Activated T-helper 1 cell treated with anti-CD3 and anti-CD28 coated beads, Interleukin-12 subunit alpha, Interleukin-12 subunit beta, Interleukin-2, Interleukin-4 antibody, amounts not matched to agents 30 ng/mL and 10 ng/mL and 1 ng/mL, durations not matched to agents 14 hours and 24 hours and 36 hours (primary cell): ENCODE measurements at regions of chr17 and their contacts with region 1.

Region 1: GRCh38 chr17:43170766-43171585 is at the start of gene NBR1:
- DNase-seq: peak; percentile 96
- H3K4me3 Mint-ChIP-seq: no peak within 1 kb of the TSS
- H3K27ac Mint-ChIP-seq: no peak within 1 kb of the TSS
- H3K4me1 Mint-ChIP-seq: peaks cover 26% of the 10 kb centered on the region
- H3K27me3 Mint-ChIP-seq: no peaks in the 10 kb centered on the region
- total RNA-seq, gene NBR1: 53.4 and 56.1 TPM in 2 replicates

Region 2: GRCh38 chr17:42609182-42609813 is 561.7 kb before region 1 on chr17 and contains the starts of genes RETREG3 and TUBG1:
- intact Hi-C with region 1: loop called (anchors 2 kb)
- DNase-seq: peak; percentile 100
- H3K4me3 Mint-ChIP-seq: peak within 1 kb of the TSS; percentile 100
- H3K27ac Mint-ChIP-seq: peak within 1 kb of the TSS; percentile 94
- H3K4me1 Mint-ChIP-seq: peaks cover 39% of the 10 kb centered on the region
- H3K27me3 Mint-ChIP-seq: no peaks in the 10 kb centered on the region
- total RNA-seq, gene RETREG3: 41.1 and 43.4 TPM in 2 replicates
- total RNA-seq, gene TUBG1: 90.0 and 95.2 TPM in 2 replicates

Region 3: DNA sequence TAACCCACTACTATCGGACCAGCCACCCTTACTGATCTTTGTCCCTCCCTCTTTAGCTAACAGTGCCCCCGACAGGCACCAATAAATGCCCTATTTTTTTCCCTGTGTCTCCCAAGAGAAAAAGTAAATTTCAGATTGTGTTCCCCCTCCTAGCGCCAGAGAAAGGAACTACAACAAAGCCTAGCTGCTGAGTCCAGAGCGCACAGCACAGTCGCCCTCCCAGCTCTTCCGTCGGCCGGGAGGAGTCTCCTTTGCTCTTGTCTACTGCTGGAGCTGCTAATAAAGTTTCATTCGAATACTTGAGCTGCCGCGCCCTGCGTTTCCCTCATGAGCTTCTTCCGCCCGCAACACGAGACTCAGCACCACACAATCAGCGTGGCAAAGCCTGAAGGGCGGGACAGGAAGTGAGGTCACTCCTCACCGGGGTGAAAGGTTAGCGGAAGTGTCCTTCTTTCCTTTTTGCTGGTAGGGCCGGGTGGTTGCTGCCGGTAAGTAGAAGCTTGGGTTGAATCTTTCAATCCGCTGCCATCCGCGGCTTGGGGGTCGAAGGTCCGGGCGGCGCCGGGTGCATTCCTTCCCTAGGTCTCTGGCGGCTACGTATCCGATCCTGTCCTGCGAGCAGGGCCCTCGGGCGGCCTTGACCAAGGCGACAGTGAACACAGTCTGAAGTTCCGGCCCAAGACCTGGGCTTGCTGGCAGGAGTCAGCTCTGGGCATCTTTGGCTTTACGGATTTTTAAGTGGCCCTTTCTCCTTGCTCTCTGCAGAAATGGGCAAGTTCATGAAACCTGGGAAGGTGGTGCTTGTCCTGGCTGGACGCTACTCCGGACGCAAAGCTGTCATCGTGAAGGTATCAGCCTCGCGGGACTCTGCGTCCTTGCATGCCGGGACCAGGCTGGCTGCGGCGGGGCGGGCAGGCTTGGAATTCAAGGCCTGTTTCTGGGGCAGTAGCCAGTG is 172.7 kb before region 1 on chr17 and contains the start of gene RPL27:
- intact Hi-C with region 1: loop called (anchors 1 kb)
- DNase-seq: peak; percentile 95
- H3K4me3 Mint-ChIP-seq: peak within 1 kb of the TSS; percentile 94
- H3K27ac Mint-ChIP-seq: peak within 1 kb of the TSS; percentile 96
- H3K4me1 Mint-ChIP-seq: peaks cover 23% of the 10 kb centered on the region
- H3K27me3 Mint-ChIP-seq: no peaks in the 10 kb centered on the region
- total RNA-seq, gene RPL27: 1,049 and 1,126 TPM in 2 replicates

Region 4: DNA sequence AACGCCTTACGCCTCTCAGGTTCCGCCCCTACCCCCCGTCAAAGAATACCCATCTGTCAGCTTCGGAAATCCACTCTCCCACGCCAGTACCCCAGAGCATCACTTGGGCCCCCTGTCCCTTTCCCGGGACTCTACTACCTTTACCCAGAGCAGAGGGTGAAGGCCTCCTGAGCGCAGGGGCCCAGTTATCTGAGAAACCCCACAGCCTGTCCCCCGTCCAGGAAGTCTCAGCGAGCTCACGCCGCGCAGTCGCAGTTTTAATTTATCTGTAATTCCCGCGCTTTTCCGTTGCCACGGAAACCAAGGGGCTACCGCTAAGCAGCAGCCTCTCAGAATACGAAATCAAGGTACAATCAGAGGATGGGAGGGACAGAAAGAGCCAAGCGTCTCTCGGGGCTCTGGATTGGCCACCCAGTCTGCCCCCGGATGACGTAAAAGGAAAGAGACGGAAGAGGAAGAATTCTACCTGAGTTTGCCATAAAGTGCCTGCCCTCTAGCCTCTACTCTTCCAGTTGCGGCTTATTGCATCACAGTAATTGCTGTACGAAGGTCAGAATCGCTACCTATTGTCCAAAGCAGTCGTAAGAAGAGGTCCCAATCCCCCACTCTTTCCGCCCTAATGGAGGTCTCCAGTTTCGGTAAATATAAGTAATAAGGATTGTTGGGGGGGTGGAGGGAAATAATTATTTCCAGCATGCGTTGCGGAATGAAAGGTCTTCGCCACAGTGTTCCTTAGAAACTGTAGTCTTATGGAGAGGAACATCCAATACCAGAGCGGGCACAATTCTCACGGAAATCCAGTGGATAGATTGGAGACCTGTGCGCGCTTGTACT is 45.6 kb before region 1 on chr17 and contains the start of gene BRCA1:
- intact Hi-C with region 1: loop called (anchors 1 kb)
- DNase-seq: peak; percentile 93
- H3K4me3 Mint-ChIP-seq: peak within 1 kb of the TSS; percentile 99
- H3K27ac Mint-ChIP-seq: peak within 1 kb of the TSS; percentile 99
- H3K4me1 Mint-ChIP-seq: peaks cover 24% of the 10 kb centered on the region
- H3K27me3 Mint-ChIP-seq: no peaks in the 10 kb centered on the region
- total RNA-seq, gene BRCA1: 76.1 and 79.8 TPM in 2 replicates

Region 5: GRCh38 chr17:43316522-43317142 is 145.7 kb after region 1 on chr17:
- intact Hi-C with region 1: loop called (anchors 1 kb)
- DNase-seq: peak; percentile 38
- H3K4me3 Mint-ChIP-seq: no peak overlapping the region
- H3K27ac Mint-ChIP-seq: peak overlapping the region; percentile 77
- H3K4me1 Mint-ChIP-seq: peaks cover 24% of the 10 kb centered on the region
- H3K27me3 Mint-ChIP-seq: peaks cover 2% of the 10 kb centered on the region

Region 6: GRCh38 chr17:43388359-43389045 is 217.5 kb after region 1 on chr17:
- intact Hi-C with region 1: loop called (anchors 2 kb)
- DNase-seq: peak; percentile 89
- H3K4me3 Mint-ChIP-seq: peak overlapping the region; percentile 89
- H3K27ac Mint-ChIP-seq: peak overlapping the region; percentile 93
- H3K4me1 Mint-ChIP-seq: peaks cover 26% of the 10 kb centered on the region
- H3K27me3 Mint-ChIP-seq: peaks cover 4% of the 10 kb centered on the region